ENCODE measurements at regions of chr5 and their contacts with region 1.

Region 1: GRCh38 chr5:135426102-135427082 is 20.8 kb downstream of the DCANP1 start:
- DNase-seq: peak; percentile 63 to 65
- ATAC-seq: peak; percentile 89 to 96
- H3K4me3 ChIP-seq: no peak overlapping the region
- H3K27ac ChIP-seq: no peak overlapping the region
- H3K4me1 ChIP-seq: peaks cover 8% of the 10 kb centered on the region; the same call in 2 of the 3 replicates
- CTCF ChIP-seq: peak; percentile 48
- EP300 ChIP-seq: no peak
- POLR2A ChIP-seq: no peak
- RAD21 ChIP-seq: peak; percentile 30 to 52; a peak in 3 of 5 replicates

Region 2: GRCh38 chr5:135400866-135401265 is 25.5 kb before region 1 on chr5:
- CTCF ChIA-PET with region 1: interaction called, 10 read pairs
- POLR2A ChIA-PET with region 1: interaction called, 6 read pairs
- DNase-seq: no peak
- ATAC-seq: no peak
- H3K4me3 ChIP-seq: no peak overlapping the region
- H3K27ac ChIP-seq: no peak overlapping the region
- H3K4me1 ChIP-seq: peaks cover 22% of the 10 kb centered on the region
- CTCF ChIP-seq: no peak
- EP300 ChIP-seq: no peak
- POLR2A ChIP-seq: no peak
- RAD21 ChIP-seq: no peak

Region 3: GRCh38 chr5:135443161-135443960 is 17.0 kb after region 1 on chr5:
- CTCF ChIA-PET with region 1: interaction called, 22 read pairs
- POLR2A ChIA-PET with region 1: no interaction called
- DNase-seq: no peak
- ATAC-seq: no peak
- H3K4me3 ChIP-seq: no peak overlapping the region
- H3K27ac ChIP-seq: no peak overlapping the region
- H3K4me1 ChIP-seq: no peaks in the 10 kb centered on the region
- CTCF ChIP-seq: no peak
- EP300 ChIP-seq: no peak
- POLR2A ChIP-seq: no peak
- RAD21 ChIP-seq: no peak